OCI-LY7 (cell line): ENCODE measurements at regions of chr5 and their contacts with region 1.

Region 1: GRCh38 chr5:87588316-87588715 is 175.6 kb upstream of the CCNH start:
- DNase-seq: no peak
- H3K4me3 ChIP-seq: no peak overlapping the region
- H3K27ac ChIP-seq: no peak overlapping the region
- H3K4me1 ChIP-seq: no peaks in the 10 kb centered on the region
- CTCF ChIP-seq: no peak

Region 2: GRCh38 chr5:87526131-87526530 is 62.2 kb before region 1 on chr5:
- CTCF ChIA-PET with region 1: no interaction called
- POLR2A ChIA-PET with region 1: no interaction called
- intact Hi-C with region 1: loop called (anchors 1 kb)
- DNase-seq: no peak
- H3K4me3 ChIP-seq: no peak overlapping the region
- H3K27ac ChIP-seq: no peak overlapping the region
- H3K4me1 ChIP-seq: no peaks in the 10 kb centered on the region
- CTCF ChIP-seq: no peak

Region 3: DNA sequence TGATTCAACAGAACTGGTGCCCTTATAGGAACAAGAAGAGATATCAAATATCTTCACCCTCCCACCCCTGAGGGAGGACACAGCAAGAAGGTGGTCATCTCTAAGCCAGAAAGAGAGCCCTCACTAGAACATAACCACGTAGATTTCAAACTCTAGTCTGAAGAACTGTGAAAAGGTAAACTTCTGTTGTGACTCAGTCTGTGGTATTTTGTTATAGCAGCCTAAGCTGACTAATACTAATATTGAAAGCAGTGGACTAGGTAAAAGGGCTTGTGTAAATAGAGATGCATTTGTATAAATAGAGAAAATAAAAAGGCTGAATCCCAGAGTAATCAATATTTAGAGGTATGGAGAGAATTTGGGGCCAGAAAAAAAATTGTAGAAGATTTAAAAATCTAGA is 17.9 kb before region 1 on chr5:
- CTCF ChIA-PET with region 1: no interaction called
- POLR2A ChIA-PET with region 1: no interaction called
- intact Hi-C with region 1: no loop called
- DNase-seq: no peak
- H3K4me3 ChIP-seq: no peak overlapping the region
- H3K27ac ChIP-seq: no peak overlapping the region
- H3K4me1 ChIP-seq: no peaks in the 10 kb centered on the region
- CTCF ChIP-seq: no peak